Transverse colon (tissue), 4 donors: ENCODE measurements at regions of chr6 and their contacts with region 1.

Region 1: DNA sequence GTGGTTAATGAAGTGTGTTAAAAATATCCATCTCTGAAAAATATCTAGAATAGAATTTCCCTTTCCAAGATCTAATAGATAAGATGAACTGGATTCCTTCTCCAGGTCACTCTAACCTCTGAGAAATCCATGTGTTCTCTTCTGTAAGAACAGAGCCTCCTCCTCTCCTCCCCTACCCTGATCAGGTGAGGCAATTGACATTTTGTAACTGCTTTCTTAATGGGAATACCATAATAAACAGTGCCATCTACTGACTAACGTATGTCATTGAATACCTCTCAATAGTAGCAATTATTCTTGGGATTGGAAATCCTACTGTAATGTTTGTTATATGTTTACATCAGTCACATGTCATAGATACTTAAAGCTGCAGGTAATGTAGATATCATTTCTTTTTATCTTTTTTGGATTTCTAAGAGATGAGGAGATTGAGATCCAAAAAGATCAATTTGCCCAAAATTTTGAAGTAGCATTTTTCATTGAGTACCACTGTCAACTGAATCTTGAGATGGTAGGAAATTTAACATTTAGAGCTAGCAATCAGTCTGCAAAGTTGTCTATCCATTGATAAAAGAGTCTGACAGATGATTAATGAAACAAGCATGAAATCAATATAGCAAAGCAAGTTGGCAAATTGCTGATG is 365.8 kb upstream of the HSF2 start:
- DNase-seq: no peak
- H3K4me3 ChIP-seq: no peak overlapping the region
- H3K27ac ChIP-seq: no peak overlapping the region
- H3K4me1 ChIP-seq: no peaks in the 10 kb centered on the region
- H3K27me3 ChIP-seq: no peaks in the 10 kb centered on the region
- CTCF ChIP-seq: peak; percentile 36 to 56 (median 42)
- EP300 ChIP-seq: no peak
- POLR2A ChIP-seq: no peak

Region 2: GRCh38 chr6:121430514-121431460 is 602.9 kb before region 1 on chr6:
- in situ Hi-C with region 1: loop called (anchors 10 to 25 kb)
- intact Hi-C with region 1: loop called (anchors 5 kb)
- DNase-seq: no peak
- H3K4me3 ChIP-seq: no peak overlapping the region
- H3K27ac ChIP-seq: no peak overlapping the region
- H3K4me1 ChIP-seq: no peaks in the 10 kb centered on the region
- H3K27me3 ChIP-seq: peaks cover 14% of the 10 kb centered on the region
- CTCF ChIP-seq: peak; percentile 35 to 55 (median 46)
- EP300 ChIP-seq: no peak
- POLR2A ChIP-seq: no peak

Region 3: DNA sequence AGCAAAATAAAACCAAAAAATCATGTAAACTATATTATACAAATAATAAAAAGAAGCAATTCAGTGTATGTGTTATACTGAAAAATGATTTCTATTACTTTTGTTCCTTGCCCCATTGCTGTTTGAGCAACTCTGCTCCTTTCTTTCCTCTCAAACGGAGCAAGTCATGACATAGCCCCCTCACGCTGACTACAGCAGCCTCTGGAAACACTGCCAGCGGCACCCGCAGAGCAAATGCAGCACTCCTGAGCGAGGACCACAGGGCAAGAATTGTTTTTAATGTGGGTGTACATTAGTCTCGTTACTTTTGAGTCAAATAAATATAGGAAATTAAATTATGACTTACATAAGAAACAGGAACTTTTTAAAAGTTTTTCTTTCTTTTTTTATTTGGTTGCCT is 15.7 kb after region 1 on chr6:
- in situ Hi-C with region 1: no loop called
- intact Hi-C with region 1: no loop called
- DNase-seq: no peak
- H3K4me3 ChIP-seq: no peak overlapping the region
- H3K27ac ChIP-seq: no peak overlapping the region
- H3K4me1 ChIP-seq: no peaks in the 10 kb centered on the region
- H3K27me3 ChIP-seq: no peaks in the 10 kb centered on the region
- CTCF ChIP-seq: no peak
- EP300 ChIP-seq: no peak
- POLR2A ChIP-seq: no peak